ENCODE measurements at regions of chr3 and their contacts with region 1.

Region 1: GRCh38 chr3:71208211-71209108 is 375.1 kb downstream of the FOXP1 start:
- DNase-seq: peak; percentile 22 to 71 (median 43)
- ATAC-seq: peak; percentile 79
- H3K4me3 ChIP-seq: no peak overlapping the region
- H3K27ac ChIP-seq: peak overlapping the region; percentile 60; the same call in 2 of the 3 replicates
- H3K4me1 ChIP-seq: peaks cover 7 to 24% of the 10 kb centered on the region in 2 experiments
- H3K27me3 ChIP-seq: no peaks in the 10 kb centered on the region
- CTCF ChIP-seq: no peak
- EP300 ChIP-seq: peak; percentile 88
- POLR2A ChIP-seq: no peak
- RAD21 ChIP-seq: peak in 1 of 2 experiments; percentile 26; a peak in 2 of 4 replicates

Region 2: DNA sequence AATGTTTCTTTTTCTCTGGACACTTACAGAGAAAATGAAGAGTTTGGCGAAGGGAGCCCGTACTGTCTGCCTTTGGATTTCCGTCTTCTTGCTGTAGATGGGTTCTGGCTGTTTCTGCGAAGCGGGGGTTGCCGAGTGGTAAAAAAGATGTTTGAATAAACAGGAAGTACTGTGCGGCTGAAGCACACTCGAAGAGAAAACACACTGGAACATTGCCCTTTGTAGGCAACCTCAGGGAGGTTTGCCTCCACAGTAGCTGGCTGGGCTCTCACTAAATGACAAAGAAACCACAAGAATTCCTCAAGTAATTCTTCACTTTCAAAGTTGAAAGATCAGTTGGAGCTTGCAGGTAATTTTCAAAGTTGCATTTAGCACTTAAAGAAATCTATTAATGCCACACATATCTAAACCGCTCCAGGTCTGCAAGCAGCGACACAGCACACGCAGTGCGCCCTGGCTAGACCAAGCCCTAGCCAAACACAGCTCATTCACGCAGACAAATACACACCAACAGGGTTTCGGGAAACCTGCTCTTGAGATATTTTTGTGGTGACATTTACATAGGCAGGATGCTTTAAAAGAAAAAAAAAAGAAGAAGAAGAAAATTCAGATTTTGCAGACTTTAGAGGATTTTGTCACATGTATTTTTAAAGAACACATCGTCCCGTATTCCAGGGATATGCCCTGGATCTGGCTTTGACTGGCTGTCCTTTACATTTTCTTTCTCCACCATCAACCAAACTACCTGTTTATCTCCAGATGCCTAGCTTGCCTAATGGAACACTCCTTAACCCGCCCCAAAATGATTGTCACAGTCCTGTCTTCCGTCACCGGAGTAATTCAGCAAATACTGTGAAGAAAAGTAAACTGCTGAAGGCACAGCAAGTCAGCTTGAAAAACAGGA is 77.7 kb before region 1 on chr3:
- CTCF ChIA-PET with region 1: no interaction called
- POLR2A ChIA-PET with region 1: no interaction called
- in situ Hi-C with region 1: no loop called
- intact Hi-C with region 1: loop called (anchors 5 kb)
- DNase-seq: peak in 2 of 4 experiments; percentile 47 to 76
- ATAC-seq: peak; percentile 73
- H3K4me3 ChIP-seq: peak overlapping the region; percentile 43
- H3K27ac ChIP-seq: peak overlapping the region; percentile 83
- H3K4me1 ChIP-seq: peaks cover 0 to 27% of the 10 kb centered on the region in 2 experiments; a peak in 4 of 5 replicates
- H3K27me3 ChIP-seq: no peaks in the 10 kb centered on the region
- CTCF ChIP-seq: no peak
- EP300 ChIP-seq: no peak
- POLR2A ChIP-seq: peak; percentile 57
- RAD21 ChIP-seq: no peak

Region 3: DNA sequence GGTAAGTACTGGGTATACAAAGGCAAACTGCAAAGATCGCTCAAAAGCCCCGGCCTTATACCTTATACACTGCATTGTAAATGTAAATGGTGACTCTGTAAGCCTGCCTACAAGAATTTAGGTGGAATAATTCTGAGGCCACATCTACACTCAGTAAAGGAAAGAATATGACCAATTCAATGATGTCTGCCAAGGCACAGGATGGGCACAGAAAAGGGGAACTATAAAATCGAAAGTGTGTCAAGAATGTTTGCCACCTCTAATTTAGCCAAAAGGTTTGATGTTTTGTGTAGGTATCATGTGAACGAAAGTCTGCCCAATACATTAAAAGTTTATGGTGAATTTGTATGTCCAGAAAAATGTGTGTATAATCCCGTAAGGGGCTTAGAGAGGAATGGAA is 279.0 kb after region 1 on chr3:
- CTCF ChIA-PET with region 1: no interaction called
- POLR2A ChIA-PET with region 1: no interaction called
- in situ Hi-C with region 1: no loop called
- intact Hi-C with region 1: no loop called
- DNase-seq: no peak
- ATAC-seq: no peak
- H3K4me3 ChIP-seq: no peak overlapping the region
- H3K27ac ChIP-seq: no peak overlapping the region
- H3K4me1 ChIP-seq: no peaks in the 10 kb centered on the region; a peak in 1 of 5 replicates
- H3K27me3 ChIP-seq: no peaks in the 10 kb centered on the region
- CTCF ChIP-seq: no peak
- EP300 ChIP-seq: no peak
- POLR2A ChIP-seq: no peak
- RAD21 ChIP-seq: no peak

Measured in K562 (cell line).